Natural killer cell (primary cell): ENCODE measurements at regions of chr6 and their contacts with region 1.

Region 1: GRCh38 chr6:28335564-28336283 is at the start of gene ZSCAN31:
- DNase-seq: peak; percentile 78 to 91
- ATAC-seq: peak; percentile 86 to 95 (median 89)
- H3K4me3 ChIP-seq: peak within 1 kb of the TSS; percentile 78
- H3K4me3 Mint-ChIP-seq: no peak within 1 kb of the TSS
- H3K27ac ChIP-seq: peak within 1 kb of the TSS; percentile 93
- H3K27ac Mint-ChIP-seq: no peak within 1 kb of the TSS
- H3K4me1 ChIP-seq: peaks cover 18% of the 10 kb centered on the region
- H3K4me1 Mint-ChIP-seq: peaks cover 0 to 15% of the 10 kb centered on the region in 2 donors
- H3K27me3 ChIP-seq: no peaks in the 10 kb centered on the region
- H3K27me3 Mint-ChIP-seq: peaks cover 0 to 11% of the 10 kb centered on the region in 2 donors
- CTCF ChIP-seq: no peak
- total RNA-seq, gene ZSCAN31: 0.65 to 2.2 (median 0.72) TPM

Region 2: GRCh38 chr6:28080631-28081485 is 254.9 kb before region 1 on chr6:
- intact Hi-C with region 1: loop called (anchors 5 kb)
- DNase-seq: peak; percentile 87 to 96
- ATAC-seq: peak; percentile 81 to 90 (median 87)
- H3K4me3 ChIP-seq: peak overlapping the region; percentile 83
- H3K4me3 Mint-ChIP-seq: peak overlapping the region; percentile 90
- H3K27ac ChIP-seq: peak overlapping the region; percentile 92
- H3K27ac Mint-ChIP-seq: peak overlapping the region; percentile 85 to 90
- H3K4me1 ChIP-seq: peaks cover 10% of the 10 kb centered on the region
- H3K4me1 Mint-ChIP-seq: peaks cover 17 to 26% of the 10 kb centered on the region in 2 donors
- H3K27me3 ChIP-seq: no peaks in the 10 kb centered on the region
- H3K27me3 Mint-ChIP-seq: peaks cover 0 to 9% of the 10 kb centered on the region in 2 donors
- CTCF ChIP-seq: no peak

Region 3: DNA sequence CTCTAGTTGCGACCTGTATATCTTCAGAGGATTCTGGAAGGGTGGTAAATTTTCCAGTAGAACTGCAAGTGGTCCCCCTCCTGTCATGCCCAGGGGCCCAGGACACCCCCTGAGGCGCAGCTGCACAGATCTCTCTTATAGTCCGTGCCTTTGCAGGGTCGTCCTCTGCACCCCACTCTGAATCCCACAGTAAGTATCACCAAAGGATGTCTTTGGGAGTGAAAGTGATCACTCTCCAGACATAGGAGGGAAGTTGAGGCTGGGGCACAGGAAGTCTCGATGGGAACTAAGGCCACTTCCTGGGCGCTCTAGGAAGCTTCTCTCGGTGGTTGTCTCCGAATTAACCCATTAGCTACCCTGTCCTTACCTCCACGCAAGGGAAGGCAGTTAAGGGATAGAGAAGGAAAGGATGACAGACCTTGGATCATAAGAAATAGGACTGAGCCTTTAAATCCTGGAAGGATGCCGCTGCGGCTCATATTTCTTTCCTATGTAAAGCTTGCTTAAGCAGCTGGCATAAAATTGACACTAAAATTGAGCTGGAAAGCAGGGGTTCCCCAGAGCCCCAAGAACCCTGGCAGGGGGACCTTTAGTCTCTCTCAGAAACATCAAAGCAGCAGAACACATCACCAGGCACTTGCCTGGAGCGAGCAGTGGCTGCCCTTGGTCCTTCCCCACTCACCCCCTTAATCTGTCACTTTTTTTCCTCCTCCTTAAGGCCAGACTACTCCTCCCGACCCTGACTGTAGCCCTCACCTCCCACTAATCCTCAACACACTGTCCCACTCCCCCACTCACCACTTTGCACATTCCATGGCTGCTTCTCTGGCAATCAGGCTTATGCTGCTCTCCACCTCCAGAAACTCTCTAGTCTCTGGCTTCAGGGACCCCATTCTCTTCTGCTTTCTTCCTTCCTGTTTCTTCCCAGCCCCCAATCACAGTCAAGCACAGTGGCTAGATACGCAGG is 83.4 kb before region 1 on chr6 and contains the start of gene ZKSCAN4:
- intact Hi-C with region 1: loop called (anchors 5 kb)
- DNase-seq: peak; percentile 64 to 92
- ATAC-seq: peak; percentile 90 to 93 (median 91)
- H3K4me3 ChIP-seq: peak within 1 kb of the TSS; percentile 81
- H3K4me3 Mint-ChIP-seq: peak within 1 kb of the TSS; percentile 98
- H3K27ac ChIP-seq: peak within 1 kb of the TSS; percentile 59
- H3K27ac Mint-ChIP-seq: peak within 1 kb of the TSS; percentile 68 to 88
- H3K4me1 ChIP-seq: peaks cover 12% of the 10 kb centered on the region
- H3K4me1 Mint-ChIP-seq: peaks cover 31 to 38% of the 10 kb centered on the region in 2 donors
- H3K27me3 ChIP-seq: peaks cover 3% of the 10 kb centered on the region
- H3K27me3 Mint-ChIP-seq: peaks cover 3 to 8% of the 10 kb centered on the region in 2 donors
- CTCF ChIP-seq: no peak
- total RNA-seq, gene ZKSCAN4: 1.6 to 4.2 (median 2.9) TPM

Region 4: DNA sequence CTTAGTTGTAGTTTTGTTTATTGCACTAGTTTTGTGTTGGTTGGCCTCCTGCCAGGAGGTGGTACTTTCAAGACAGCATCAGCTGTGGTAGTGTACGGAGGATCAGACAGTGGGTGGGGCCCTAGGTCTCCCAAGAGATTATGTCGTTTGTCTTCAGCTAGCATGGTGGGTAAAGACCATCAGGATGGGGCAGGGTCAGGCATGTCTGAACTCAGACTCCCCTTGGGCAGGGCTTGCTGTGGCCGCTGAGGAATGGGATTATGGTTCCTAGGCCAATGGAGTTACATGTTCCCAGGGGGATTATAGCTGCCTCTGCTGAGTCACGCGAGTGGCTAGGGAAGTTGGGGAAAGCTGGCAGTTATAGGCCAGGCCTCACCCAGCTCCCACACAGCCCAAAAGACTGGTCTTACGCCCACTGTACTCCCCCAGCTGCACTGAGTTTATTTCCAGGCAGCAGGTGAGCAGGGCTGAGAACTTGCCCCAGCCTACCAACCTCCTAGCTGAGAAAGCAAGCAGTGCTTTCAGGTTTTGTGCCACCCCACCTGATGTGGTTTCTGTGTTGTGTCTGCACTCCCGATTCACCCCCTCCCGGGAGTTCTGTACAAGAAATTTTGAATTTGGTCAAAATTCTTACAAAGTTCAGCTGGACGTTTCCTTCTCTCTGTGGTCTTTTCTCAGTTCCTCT is 24.4 kb before region 1 on chr6:
- intact Hi-C with region 1: no loop called
- DNase-seq: no peak
- ATAC-seq: no peak
- H3K4me3 ChIP-seq: no peak overlapping the region
- H3K4me3 Mint-ChIP-seq: no peak overlapping the region
- H3K27ac ChIP-seq: no peak overlapping the region
- H3K27ac Mint-ChIP-seq: no peak overlapping the region
- H3K4me1 ChIP-seq: no peaks in the 10 kb centered on the region
- H3K4me1 Mint-ChIP-seq: no peaks in the 10 kb centered on the region
- H3K27me3 ChIP-seq: no peaks in the 10 kb centered on the region
- H3K27me3 Mint-ChIP-seq: peaks cover 29 to 62% of the 10 kb centered on the region in 2 donors
- CTCF ChIP-seq: no peak

Region 5: GRCh38 chr6:28349892-28350737 is 14.4 kb after region 1 on chr6 and contains the start of gene ZKSCAN3:
- intact Hi-C with region 1: loop called (anchors 1 kb)
- DNase-seq: peak; percentile 76 to 86
- ATAC-seq: peak; percentile 94 to 100 (median 99)
- H3K4me3 ChIP-seq: peak within 1 kb of the TSS; percentile 75
- H3K4me3 Mint-ChIP-seq: peak within 1 kb of the TSS; percentile 100
- H3K27ac ChIP-seq: peak within 1 kb of the TSS; percentile 44
- H3K27ac Mint-ChIP-seq: peak within 1 kb of the TSS; percentile 95 to 97
- H3K4me1 ChIP-seq: peaks cover 13% of the 10 kb centered on the region
- H3K4me1 Mint-ChIP-seq: peaks cover 24 to 27% of the 10 kb centered on the region in 2 donors
- H3K27me3 ChIP-seq: no peaks in the 10 kb centered on the region
- H3K27me3 Mint-ChIP-seq: peaks cover 9 to 18% of the 10 kb centered on the region in 2 donors
- CTCF ChIP-seq: no peak
- total RNA-seq, gene ZKSCAN3: 3.1 to 6.0 (median 4.7) TPM